ENCODE measurements at regions of chr2 and their contacts with region 1.

Region 1: DNA sequence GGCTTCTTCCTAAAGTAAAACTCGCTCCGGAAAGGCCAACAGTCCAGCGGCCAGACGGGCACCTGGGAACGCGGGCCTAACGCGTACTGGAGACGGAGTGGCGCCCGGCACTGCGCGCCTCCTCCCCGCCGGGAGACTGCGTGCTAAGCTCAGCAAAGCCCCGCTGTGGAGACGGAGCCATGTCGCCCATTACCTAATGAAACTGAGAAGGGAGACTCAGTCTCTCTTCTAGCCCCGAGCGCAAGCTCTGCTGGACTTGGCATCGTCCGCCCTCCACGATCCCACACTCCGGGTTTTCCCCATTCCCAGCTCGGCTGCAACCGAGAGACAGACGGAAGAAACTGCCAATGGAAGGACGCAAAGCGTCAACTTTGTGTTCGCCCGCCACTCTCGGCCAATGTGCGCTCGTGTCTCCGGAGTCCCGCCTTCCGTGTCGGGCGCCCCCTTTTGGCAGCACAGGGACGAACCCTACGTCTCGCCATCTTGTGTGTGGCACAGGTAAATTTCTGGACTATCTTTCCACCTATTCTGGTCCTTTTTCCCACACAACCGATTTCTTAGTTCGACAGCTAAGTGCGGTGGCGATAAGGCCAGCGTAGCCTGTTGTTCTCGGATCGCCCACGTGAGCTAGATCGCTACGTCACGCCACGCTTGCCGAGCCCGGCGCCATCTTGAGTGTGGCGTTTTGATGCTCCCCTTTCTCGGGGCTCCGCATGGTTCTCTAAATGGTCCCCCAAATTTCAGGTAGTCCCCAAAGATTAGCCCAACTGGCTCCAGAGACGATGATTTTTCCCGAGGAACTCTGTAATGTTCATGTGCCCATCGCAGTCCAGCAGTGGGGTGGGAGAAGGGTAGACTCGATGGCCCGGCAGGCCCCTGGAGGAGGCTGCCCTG is 1.3 kb upstream of the PTMA start:
- DNase-seq: peak; percentile 95 to 99 (median 97)
- ATAC-seq: peak; percentile 46 to 51
- H3K4me3 Mint-ChIP-seq: peak overlapping the region; percentile 91 to 99 (median 96)
- H3K27ac Mint-ChIP-seq: peak overlapping the region; percentile 100
- H3K4me1 Mint-ChIP-seq: peaks cover 12 to 33% (median 25%) of the 10 kb centered on the region in 4 donors
- H3K27me3 Mint-ChIP-seq: peaks cover 0 to 4% (median 0%) of the 10 kb centered on the region in 5 donors

Region 2: DNA sequence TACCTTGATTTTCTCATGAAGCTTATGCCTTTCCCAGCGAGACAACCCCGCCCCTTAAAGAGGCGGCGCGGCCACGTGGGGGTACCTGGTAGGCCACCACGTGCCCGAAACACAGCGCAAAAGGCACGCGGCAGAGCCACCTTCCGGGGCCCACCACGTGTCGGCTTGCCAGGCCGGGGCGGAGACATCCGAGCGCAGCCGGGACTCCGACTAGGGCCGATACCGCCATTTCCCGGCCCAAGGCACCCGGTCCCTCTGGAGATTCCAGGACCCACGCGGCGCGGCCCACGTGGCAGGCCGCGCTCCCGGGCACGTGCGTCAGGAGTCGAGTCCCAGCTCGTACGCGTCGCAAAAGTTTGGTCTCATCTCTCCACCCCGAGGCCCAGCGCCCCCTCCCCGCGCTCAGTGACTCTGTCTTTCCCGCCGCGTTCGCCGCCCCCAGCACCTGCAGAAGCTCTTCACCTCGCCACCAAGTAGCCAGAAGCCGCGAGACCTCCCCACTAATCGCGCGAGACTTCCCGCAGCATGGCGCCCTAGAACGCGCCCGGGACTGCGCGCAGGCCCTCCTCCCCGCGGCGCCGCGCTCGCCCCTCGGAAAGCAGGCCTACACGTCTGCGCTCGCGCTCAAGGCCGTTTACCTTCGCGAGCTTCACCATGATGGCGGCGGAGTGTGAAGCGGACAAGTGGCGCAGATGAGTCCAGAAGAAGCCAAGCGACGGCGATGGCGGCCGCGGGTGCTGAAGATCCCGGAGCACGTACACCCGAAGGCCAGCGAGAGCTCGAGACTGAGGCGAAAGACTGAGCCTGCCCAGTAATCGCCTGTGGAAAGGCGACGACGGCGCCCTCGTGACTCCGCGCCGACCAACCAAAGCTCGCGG is 243.0 kb before region 1 on chr2 and contains the start of gene NCL:
- POLR2A ChIA-PET with region 1: interaction called, 39 read pairs
- DNase-seq: peak; percentile 81 to 96 (median 88)
- ATAC-seq: peak; percentile 85 to 88
- H3K4me3 Mint-ChIP-seq: peak within 1 kb of the TSS; percentile 91 to 99 (median 96)
- H3K27ac Mint-ChIP-seq: peak within 1 kb of the TSS; percentile 99 to 100 (median 100)
- H3K4me1 Mint-ChIP-seq: peaks cover 29 to 50% (median 47%) of the 10 kb centered on the region in 4 donors
- H3K27me3 Mint-ChIP-seq: peaks cover 0 to 3% (median 0%) of the 10 kb centered on the region in 5 donors
- polyA plus RNA-seq, gene NCL: 370 to 590 (median 468) TPM

Region 3: DNA sequence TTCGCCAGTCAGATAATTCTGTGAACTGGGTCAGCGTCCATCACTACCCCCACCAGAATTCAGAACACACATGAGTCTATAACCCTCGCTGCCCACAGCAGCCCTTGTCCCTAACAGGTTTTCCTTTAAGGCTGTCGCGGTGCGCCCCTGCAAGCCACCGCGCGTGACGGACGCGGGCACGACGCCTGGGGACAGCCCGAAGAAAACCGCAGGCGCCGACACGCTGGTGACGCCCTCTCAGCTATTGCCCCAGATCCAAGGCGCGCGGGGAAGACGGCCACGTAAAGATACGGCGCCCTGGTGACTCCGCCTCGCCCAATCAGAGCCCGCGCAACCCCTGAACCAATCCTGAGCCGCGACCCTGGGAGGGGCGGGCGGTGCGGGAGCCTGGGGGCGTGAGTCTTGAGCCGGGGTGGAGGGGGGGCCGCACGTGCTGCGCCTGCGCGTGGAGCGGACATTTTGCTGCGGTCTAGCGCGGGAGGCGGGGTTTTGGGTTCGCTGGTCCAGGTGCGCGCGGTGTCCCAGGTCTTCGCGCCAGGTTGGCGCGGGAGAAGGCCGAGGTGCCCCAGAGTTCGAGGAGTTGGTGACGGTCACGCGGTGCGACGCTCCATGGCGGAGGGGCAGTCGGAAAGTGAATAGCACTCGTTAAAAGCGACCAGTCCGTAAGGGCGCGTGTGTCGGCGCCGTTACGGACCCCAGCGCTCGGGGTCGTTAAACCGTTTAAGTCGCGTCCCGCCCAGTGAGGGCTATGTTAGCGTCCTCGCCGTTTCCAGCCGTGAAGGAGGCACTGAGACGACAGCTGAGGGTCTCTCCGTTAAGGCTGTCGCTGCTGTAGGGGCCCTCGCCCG is 192.7 kb before region 1 on chr2:
- POLR2A ChIA-PET with region 1: interaction called, 18 read pairs
- DNase-seq: peak; percentile 96 to 99 (median 98)
- ATAC-seq: peak; percentile 97 to 98
- H3K4me3 Mint-ChIP-seq: peak overlapping the region; percentile 82 to 94 (median 91)
- H3K27ac Mint-ChIP-seq: peak overlapping the region; percentile 91 to 99 (median 98)
- H3K4me1 Mint-ChIP-seq: peaks cover 5 to 21% (median 17%) of the 10 kb centered on the region in 4 donors
- H3K27me3 Mint-ChIP-seq: no peaks in the 10 kb centered on the region

Region 4: GRCh38 chr2:231612179-231613053 is 94.6 kb before region 1 on chr2:
- POLR2A ChIA-PET with region 1: interaction called, 53 read pairs
- DNase-seq: peak; percentile 76 to 94 (median 85)
- ATAC-seq: peak; percentile 59 to 76
- H3K4me3 Mint-ChIP-seq: peak overlapping the region; percentile 57 to 91 (median 88)
- H3K27ac Mint-ChIP-seq: peak overlapping the region; percentile 5 to 95 (median 80)
- H3K4me1 Mint-ChIP-seq: peaks cover 10 to 38% (median 30%) of the 10 kb centered on the region in 4 donors
- H3K27me3 Mint-ChIP-seq: no peaks in the 10 kb centered on the region

Region 5: GRCh38 chr2:231662028-231662810 is 44.8 kb before region 1 on chr2:
- POLR2A ChIA-PET with region 1: interaction called, 158 read pairs
- DNase-seq: peak; percentile 92 to 99 (median 98)
- ATAC-seq: peak; percentile 88 to 91
- H3K4me3 Mint-ChIP-seq: peak overlapping the region; percentile 71 to 87 (median 82)
- H3K27ac Mint-ChIP-seq: peak overlapping the region; percentile 82 to 99 (median 96)
- H3K4me1 Mint-ChIP-seq: peaks cover 6 to 37% (median 17%) of the 10 kb centered on the region in 4 donors
- H3K27me3 Mint-ChIP-seq: no peaks in the 10 kb centered on the region

Region 6: GRCh38 chr2:231674587-231675338 is 32.2 kb before region 1 on chr2:
- POLR2A ChIA-PET with region 1: interaction called, 124 read pairs
- DNase-seq: peak; percentile 26 to 79 (median 47)
- ATAC-seq: peak; percentile 60 to 67
- H3K4me3 Mint-ChIP-seq: peak overlapping the region in 1 of 10 donors; percentile 20
- H3K27ac Mint-ChIP-seq: peak overlapping the region in 2 of 10 donors; percentile 46 to 61
- H3K4me1 Mint-ChIP-seq: peaks cover 3 to 44% (median 8%) of the 10 kb centered on the region in 4 donors
- H3K27me3 Mint-ChIP-seq: peaks cover 0 to 2% (median under 1%) of the 10 kb centered on the region in 5 donors

Region 7: DNA sequence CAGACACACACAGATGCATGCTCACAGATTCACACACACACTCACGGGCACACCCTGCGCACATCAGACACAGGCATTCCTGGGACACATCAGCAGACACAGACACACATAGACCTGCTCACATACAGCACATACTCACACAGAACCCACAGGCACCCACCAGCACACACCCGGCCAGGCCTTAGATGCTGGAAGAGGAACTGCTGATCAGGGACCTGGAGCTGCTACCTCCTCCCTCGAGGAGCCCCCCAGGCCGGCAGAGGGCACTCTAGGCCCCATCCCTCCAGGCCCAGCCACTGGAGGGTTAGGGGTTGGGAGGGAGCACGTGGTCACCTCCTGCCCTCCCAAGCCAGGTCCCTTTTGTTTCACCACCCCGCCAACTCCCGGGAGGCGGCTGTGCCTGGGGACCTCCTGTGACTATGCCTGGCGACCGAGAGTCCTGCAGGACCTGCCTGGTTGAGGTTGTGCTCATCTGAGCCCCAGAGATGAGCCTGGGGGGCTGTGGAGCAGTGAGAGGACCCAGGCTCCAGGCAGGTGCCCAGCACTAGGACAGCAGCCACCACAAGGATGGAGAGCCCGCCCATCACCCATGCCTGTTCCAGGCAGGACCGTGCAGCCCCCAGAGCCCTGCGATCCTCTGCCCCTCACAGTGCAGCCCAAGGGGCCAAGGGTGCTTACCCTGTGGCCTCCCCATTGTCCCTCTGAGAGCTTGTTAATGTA is 19.7 kb before region 1 on chr2:
- POLR2A ChIA-PET with region 1: interaction called, 124 read pairs
- DNase-seq: peak; percentile 52 to 87 (median 66)
- ATAC-seq: peak; percentile 95 to 98
- H3K4me3 Mint-ChIP-seq: no peak overlapping the region
- H3K27ac Mint-ChIP-seq: peak overlapping the region in 5 of 10 donors; percentile 27 to 64 (median 41)
- H3K4me1 Mint-ChIP-seq: peaks cover 5 to 17% (median 13%) of the 10 kb centered on the region in 4 donors
- H3K27me3 Mint-ChIP-seq: peaks cover 0 to 12% (median 7%) of the 10 kb centered on the region in 5 donors

Region 8: GRCh38 chr2:231722721-231723307 is 15.8 kb after region 1 on chr2:
- POLR2A ChIA-PET with region 1: no interaction called
- DNase-seq: no peak
- ATAC-seq: no peak
- H3K4me3 Mint-ChIP-seq: no peak overlapping the region
- H3K27ac Mint-ChIP-seq: no peak overlapping the region
- H3K4me1 Mint-ChIP-seq: peaks cover 0 to 6% (median 0%) of the 10 kb centered on the region in 4 donors
- H3K27me3 Mint-ChIP-seq: no peaks in the 10 kb centered on the region

Measured in naive thymus-derived CD8-positive, alpha-beta T cell (primary cell).